ENCODE measurements at regions of chr11 and their contacts with region 1.

Region 1: GRCh38 chr11:107092667-107093066 is 74.4 kb upstream of the GUCY1A2 start:
- DNase-seq: no peak
- H3K4me3 ChIP-seq: no peak overlapping the region
- H3K27ac ChIP-seq: no peak overlapping the region
- H3K4me1 ChIP-seq: no peaks in the 10 kb centered on the region
- H3K27me3 ChIP-seq: no peaks in the 10 kb centered on the region
- CTCF ChIP-seq: no peak
- EP300 ChIP-seq: no peak
- POLR2A ChIP-seq: no peak

Region 2: DNA sequence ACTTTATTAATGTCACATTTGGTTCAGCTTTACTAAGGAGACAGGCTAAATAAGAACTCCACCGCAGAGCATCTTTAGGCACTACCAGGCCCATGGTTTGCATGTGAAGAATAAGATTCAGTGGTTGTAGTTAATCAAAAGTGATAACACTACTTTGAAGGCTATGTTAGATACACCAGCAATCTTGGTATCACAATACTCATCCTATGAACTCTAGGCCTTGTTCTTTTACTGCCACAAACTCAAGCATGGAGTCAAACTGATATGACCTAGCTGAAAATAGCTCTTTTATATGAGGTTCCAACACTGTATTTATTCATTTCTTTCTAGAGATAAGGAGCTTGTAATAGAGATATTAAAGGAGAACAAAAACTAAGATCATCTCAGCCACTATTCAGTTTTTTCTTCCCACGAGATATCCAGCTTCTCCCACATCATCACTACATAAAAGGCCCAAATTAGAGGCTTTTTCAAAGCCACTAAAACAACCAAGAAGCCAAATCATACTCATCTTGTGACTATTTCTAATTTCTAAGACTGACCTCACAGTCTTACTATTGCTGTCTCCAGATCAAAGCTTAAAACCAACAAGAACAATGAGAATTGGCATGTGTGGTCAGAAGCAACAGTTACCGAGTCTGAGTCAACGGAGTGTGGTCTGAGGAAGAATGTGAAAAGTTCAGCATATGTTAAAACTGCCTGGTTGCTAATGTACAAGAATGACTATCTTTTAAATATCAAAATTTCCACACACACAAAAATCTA is 49.2 kb before region 1 on chr11:
- intact Hi-C with region 1: no loop called
- DNase-seq: no peak
- H3K4me3 ChIP-seq: no peak overlapping the region
- H3K27ac ChIP-seq: no peak overlapping the region
- H3K4me1 ChIP-seq: no peaks in the 10 kb centered on the region
- H3K27me3 ChIP-seq: no peaks in the 10 kb centered on the region
- CTCF ChIP-seq: no peak
- EP300 ChIP-seq: no peak
- POLR2A ChIP-seq: no peak

Region 3: GRCh38 chr11:107172996-107173395 is 80.3 kb after region 1 on chr11:
- intact Hi-C with region 1: loop called in 1 of 4 experiments (anchors 5 kb)
- DNase-seq: no peak
- H3K4me3 ChIP-seq: no peak overlapping the region
- H3K27ac ChIP-seq: no peak overlapping the region
- H3K4me1 ChIP-seq: no peaks in the 10 kb centered on the region
- H3K27me3 ChIP-seq: no peaks in the 10 kb centered on the region
- CTCF ChIP-seq: no peak
- EP300 ChIP-seq: no peak
- POLR2A ChIP-seq: no peak